ENCODE measurements at regions of chr1 and their contacts with region 1.

Region 1: DNA sequence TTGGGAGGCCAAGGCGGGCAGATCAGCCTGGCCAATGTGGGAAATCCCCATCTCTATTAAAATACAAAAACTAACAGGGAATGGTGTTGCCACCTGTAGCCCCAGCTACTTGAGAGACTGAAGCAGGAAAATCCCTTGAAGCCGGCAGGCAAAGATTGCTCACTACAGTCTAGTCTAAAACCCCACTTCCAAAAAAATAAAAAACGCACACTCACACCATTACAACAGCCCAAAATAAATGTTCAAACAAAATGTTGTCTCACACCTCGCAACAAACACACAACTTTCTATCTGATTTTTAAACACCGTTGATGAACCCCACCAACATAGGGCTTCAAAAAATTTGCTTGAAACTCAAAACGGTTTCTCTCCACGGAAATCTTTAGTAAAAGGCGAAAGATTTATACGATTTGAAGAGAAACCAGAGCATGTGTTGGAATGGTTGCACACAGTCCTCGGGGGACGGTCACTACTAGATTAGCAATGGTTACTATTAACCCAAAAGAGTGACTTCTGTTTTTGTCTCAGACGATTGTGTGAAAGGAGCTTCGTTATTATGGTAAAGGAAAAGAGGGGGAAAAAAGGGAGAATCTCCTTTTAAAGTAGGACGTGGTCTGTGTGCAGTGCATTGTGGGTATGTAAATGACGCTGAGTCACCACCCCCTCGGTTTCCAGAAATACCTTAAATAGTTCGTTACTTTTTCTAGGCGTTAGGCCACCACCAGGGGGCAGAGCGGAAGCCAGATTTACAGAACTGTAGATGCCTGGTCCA is at the start of gene RNU5D-1:
- DNase-seq: peak; percentile 95 to 96
- H3K4me3 ChIP-seq: peak within 1 kb of the TSS; percentile 47; the same call in 1 of the 2 replicates
- H3K27ac ChIP-seq: peak within 1 kb of the TSS; percentile 98
- H3K4me1 ChIP-seq: peaks cover 54% of the 10 kb centered on the region
- H3K27me3 ChIP-seq: no peaks in the 10 kb centered on the region
- CTCF ChIP-seq: peak; percentile 92
- total RNA-seq, gene RNU5D-1: not detected in 2 replicates

Region 2: GRCh38 chr1:44227211-44227610 is 503.7 kb before region 1 on chr1:
- CTCF ChIA-PET with region 1: no interaction called
- POLR2A ChIA-PET with region 1: no interaction called
- intact Hi-C with region 1: no loop called
- DNase-seq: no peak
- H3K4me3 ChIP-seq: no peak overlapping the region
- H3K27ac ChIP-seq: no peak overlapping the region
- H3K4me1 ChIP-seq: no peaks in the 10 kb centered on the region
- H3K27me3 ChIP-seq: no peaks in the 10 kb centered on the region
- CTCF ChIP-seq: no peak

Region 3: GRCh38 chr1:44631647-44632539 is 99.0 kb before region 1 on chr1:
- CTCF ChIA-PET with region 1: no interaction called
- POLR2A ChIA-PET with region 1: no interaction called
- intact Hi-C with region 1: no loop called
- DNase-seq: peak; percentile 76 to 90
- H3K4me3 ChIP-seq: peak overlapping the region; percentile 74
- H3K27ac ChIP-seq: peak overlapping the region; percentile 97
- H3K4me1 ChIP-seq: peaks cover 44% of the 10 kb centered on the region
- H3K27me3 ChIP-seq: no peaks in the 10 kb centered on the region
- CTCF ChIP-seq: no peak

Region 4: GRCh38 chr1:44688760-44689446 is 42.0 kb before region 1 on chr1:
- CTCF ChIA-PET with region 1: no interaction called
- POLR2A ChIA-PET with region 1: interaction called, 33 read pairs
- intact Hi-C with region 1: no loop called
- DNase-seq: no peak
- H3K4me3 ChIP-seq: no peak overlapping the region
- H3K27ac ChIP-seq: no peak overlapping the region
- H3K4me1 ChIP-seq: peaks cover 6% of the 10 kb centered on the region; the same call in 1 of the 2 replicates
- H3K27me3 ChIP-seq: no peaks in the 10 kb centered on the region
- CTCF ChIP-seq: no peak

Region 5: GRCh38 chr1:44799770-44800584 is 69.0 kb after region 1 on chr1 and contains the start of gene PLK3:
- CTCF ChIA-PET with region 1: interaction called, 5 read pairs
- POLR2A ChIA-PET with region 1: interaction called, 22 read pairs
- intact Hi-C with region 1: loop called (anchors 10 kb)
- DNase-seq: peak; percentile 88 to 99
- H3K4me3 ChIP-seq: peak within 1 kb of the TSS; percentile 82
- H3K27ac ChIP-seq: peak within 1 kb of the TSS; percentile 81
- H3K4me1 ChIP-seq: peaks cover 45% of the 10 kb centered on the region
- H3K27me3 ChIP-seq: no peaks in the 10 kb centered on the region
- CTCF ChIP-seq: peak; percentile 88
- total RNA-seq, gene PLK3: 12.7 and 13.0 TPM in 2 replicates

Region 6: GRCh38 chr1:44994309-44994898 is 263.5 kb after region 1 on chr1:
- CTCF ChIA-PET with region 1: no interaction called
- POLR2A ChIA-PET with region 1: interaction called, 38 read pairs
- intact Hi-C with region 1: no loop called
- DNase-seq: no peak
- H3K4me3 ChIP-seq: no peak overlapping the region
- H3K27ac ChIP-seq: no peak overlapping the region
- H3K4me1 ChIP-seq: no peaks in the 10 kb centered on the region
- H3K27me3 ChIP-seq: no peaks in the 10 kb centered on the region
- CTCF ChIP-seq: no peak

Region 7: DNA sequence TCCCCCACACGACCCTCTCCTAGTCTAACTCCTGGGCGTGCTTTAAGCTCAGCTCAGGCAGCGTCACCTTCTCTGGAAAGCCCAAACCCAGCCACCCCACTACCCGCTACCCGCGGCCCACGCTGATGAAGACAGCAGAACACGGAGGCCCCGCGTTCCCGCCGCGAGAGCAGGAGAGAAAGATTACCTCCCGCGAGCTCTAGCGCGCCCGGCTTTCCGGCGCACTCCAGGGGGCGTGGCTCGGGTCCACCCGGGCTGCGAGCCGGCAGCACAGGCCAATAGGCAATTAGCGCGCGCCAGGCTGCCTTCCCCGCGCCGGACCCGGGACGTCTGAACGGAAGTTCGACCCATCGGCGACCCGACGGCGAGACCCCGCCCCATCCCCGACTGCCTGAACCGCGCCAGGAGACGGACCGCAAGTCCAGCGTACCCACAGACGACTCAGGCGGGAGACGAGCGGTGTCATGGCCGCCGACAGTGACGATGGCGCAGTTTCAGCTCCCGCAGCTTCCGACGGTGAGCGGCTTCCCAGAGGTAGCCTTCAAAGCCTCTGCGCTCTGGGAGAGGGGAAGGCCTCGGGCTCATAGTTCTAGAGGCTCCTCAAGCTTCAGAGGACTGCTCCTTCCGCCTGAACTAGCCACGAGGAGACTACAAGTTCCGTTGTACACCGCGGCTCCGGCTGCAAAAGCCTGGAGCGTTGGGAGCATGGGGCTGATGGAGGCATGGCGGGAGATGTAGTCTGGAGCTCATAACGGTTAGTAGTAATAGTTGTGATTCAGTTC is 609.1 kb after region 1 on chr1 and contains the starts of genes MUTYH and TOE1:
- CTCF ChIA-PET with region 1: no interaction called
- POLR2A ChIA-PET with region 1: no interaction called
- intact Hi-C with region 1: loop called (anchors 2 kb)
- DNase-seq: peak; percentile 79 to 97
- H3K4me3 ChIP-seq: peak within 1 kb of the TSS; percentile 68
- H3K27ac ChIP-seq: peak within 1 kb of the TSS; percentile 86
- H3K4me1 ChIP-seq: peaks cover 55% of the 10 kb centered on the region
- H3K27me3 ChIP-seq: no peaks in the 10 kb centered on the region
- CTCF ChIP-seq: 0 out of 2 replicates have a peak, but pooled peaks have one; percentile 24
- total RNA-seq, gene MUTYH: 52.4 and 53.2 TPM in 2 replicates
- total RNA-seq, gene TOE1: 14.5 and 20.4 TPM in 2 replicates

Region 8: DNA sequence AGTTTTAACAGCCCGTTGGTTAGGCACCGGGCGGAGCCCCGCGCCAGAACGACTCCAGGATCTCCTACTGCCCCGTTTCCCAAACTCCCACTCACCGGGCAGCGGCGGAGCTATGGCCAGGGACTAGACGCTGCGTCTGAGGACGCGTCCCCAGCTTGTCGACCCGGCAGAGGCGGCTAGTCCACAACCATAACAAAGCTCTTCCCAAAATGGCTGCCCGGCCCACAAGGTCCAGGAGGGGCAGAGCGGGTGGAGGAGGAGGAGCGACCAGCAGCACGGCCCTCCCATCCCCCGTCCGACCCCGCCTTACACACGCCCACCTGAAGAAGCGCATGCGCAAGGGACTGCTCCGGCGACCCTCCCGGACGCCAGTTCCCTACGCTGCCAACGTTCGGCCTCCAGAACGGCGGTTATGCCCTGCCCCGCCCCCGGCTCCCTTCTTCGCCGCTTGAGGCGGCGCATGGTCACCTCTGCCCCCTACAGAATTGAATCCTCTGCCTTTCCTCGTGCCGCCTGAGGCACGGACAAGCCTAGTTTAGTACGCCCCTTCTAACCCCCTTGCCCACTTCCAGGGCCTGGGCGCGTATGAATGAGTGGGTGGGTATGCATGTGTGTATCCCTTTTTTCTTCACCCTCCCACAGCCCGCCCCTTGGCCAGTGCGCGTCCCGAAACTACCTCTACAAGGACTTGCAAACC is 955.5 kb after region 1 on chr1 and contains the start of gene GPBP1L1:
- CTCF ChIA-PET with region 1: no interaction called
- POLR2A ChIA-PET with region 1: interaction called, 25 read pairs
- intact Hi-C with region 1: no loop called
- DNase-seq: peak; percentile 82 to 98
- H3K4me3 ChIP-seq: peak within 1 kb of the TSS; percentile 94
- H3K27ac ChIP-seq: peak within 1 kb of the TSS; percentile 95
- H3K4me1 ChIP-seq: peaks cover 16% of the 10 kb centered on the region
- H3K27me3 ChIP-seq: no peaks in the 10 kb centered on the region
- CTCF ChIP-seq: no peak
- total RNA-seq, gene GPBP1L1: 124 and 138 TPM in 2 replicates

Region 9: GRCh38 chr1:46425726-46426125 is 1694.8 kb after region 1 on chr1:
- CTCF ChIA-PET with region 1: no interaction called
- POLR2A ChIA-PET with region 1: no interaction called
- intact Hi-C with region 1: no loop called
- DNase-seq: no peak
- H3K4me3 ChIP-seq: no peak overlapping the region
- H3K27ac ChIP-seq: no peak overlapping the region
- H3K4me1 ChIP-seq: no peaks in the 10 kb centered on the region
- H3K27me3 ChIP-seq: no peaks in the 10 kb centered on the region; the same call in 1 of the 2 replicates
- CTCF ChIP-seq: no peak

Measured in PC-9 (cell line).